ENCODE measurements at regions of chr11 and their contacts with region 1.

Region 1: GRCh38 chr11:2892215-2893020 is 6.8 kb upstream of the CDKN1C start:
- DNase-seq: peak; percentile 86
- ATAC-seq: peak; percentile 70
- H3K4me3 Mint-ChIP-seq: peak overlapping the region; percentile 80
- H3K27ac Mint-ChIP-seq: peak overlapping the region; percentile 92
- H3K4me1 Mint-ChIP-seq: peaks cover 34% of the 10 kb centered on the region
- H3K27me3 Mint-ChIP-seq: peaks cover under 1% of the 10 kb centered on the region

Region 2: GRCh38 chr11:2750682-2751387 is 141.6 kb before region 1 on chr11:
- CTCF ChIA-PET with region 1: no interaction called
- POLR2A ChIA-PET with region 1: no interaction called
- DNase-seq: no peak
- ATAC-seq: no peak
- H3K4me3 Mint-ChIP-seq: no peak overlapping the region
- H3K27ac Mint-ChIP-seq: no peak overlapping the region
- H3K4me1 Mint-ChIP-seq: no peaks in the 10 kb centered on the region
- H3K27me3 Mint-ChIP-seq: no peaks in the 10 kb centered on the region

Region 3: DNA sequence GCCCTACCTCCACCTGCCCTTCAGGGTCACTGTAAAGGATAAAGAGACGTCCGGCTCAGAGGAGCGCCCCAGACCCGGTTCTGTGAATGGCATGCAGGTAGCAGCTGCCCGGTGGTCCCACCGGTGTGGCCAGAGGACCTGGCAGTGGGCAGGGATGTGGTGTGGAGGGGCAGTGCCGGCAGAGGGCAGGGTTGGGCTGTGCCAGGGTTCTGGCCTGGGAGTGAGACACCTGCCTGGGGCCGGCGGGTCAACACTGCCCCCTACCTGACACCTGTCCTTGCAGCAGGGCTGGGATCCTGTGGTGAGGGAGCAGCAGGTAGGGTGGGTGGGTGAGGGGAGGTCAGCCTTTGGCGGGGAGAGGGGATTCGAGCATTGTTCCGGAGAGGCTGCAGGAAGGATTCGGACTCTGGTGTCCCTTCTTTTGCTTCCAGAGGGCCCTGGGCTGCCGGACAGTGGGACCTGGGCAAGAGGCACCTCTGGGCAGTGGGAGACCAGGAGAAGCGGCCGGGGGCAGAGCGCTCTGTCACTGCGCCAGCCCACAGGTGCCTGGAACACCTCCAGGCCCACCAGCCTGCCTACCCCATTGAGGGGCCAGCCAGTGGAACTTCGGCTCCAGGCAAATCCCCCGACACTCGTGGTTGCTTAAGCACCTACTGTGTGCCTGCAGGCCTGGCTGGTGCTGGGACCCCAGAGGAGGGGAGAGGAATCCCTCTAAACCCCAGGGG is 38.4 kb after region 1 on chr11:
- CTCF ChIA-PET with region 1: interaction called, 55 read pairs
- POLR2A ChIA-PET with region 1: interaction called, 6 read pairs
- DNase-seq: peak; percentile 72
- ATAC-seq: peak; percentile 23
- H3K4me3 Mint-ChIP-seq: peak overlapping the region; percentile 73
- H3K27ac Mint-ChIP-seq: peak overlapping the region; percentile 66
- H3K4me1 Mint-ChIP-seq: peaks cover 44% of the 10 kb centered on the region
- H3K27me3 Mint-ChIP-seq: peaks cover 26% of the 10 kb centered on the region